Mammary epithelial cell (primary cell): ENCODE measurements at regions of chr1 and their contacts with region 1.

Region 1: DNA sequence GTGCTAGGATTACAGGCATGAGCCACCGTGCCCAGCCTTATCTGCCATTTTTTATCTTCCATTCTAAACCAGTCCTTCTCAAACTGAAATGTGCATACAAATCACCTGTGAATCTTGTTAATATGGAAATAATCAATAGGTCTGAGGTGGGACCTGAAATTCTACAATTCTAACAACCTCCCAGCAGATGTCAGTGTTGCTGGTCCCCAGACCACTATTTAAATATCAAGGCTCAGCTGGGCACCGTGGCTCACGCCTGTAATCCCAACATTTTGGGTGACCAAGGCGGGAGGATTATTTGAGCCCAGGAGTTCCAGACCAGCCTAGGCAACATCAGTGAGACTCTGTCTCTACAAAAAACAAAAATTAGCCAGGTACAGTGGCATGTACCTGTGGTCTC is 4.1 kb downstream of the UQCRHL start:
- DNase-seq: no peak
- H3K4me3 ChIP-seq: no peak overlapping the region
- H3K27ac ChIP-seq: no peak overlapping the region
- H3K4me1 ChIP-seq: peaks cover 37% of the 10 kb centered on the region
- H3K27me3 ChIP-seq: no peaks in the 10 kb centered on the region
- CTCF ChIP-seq: peak; percentile 37 to 49

Region 2: GRCh38 chr1:15696956-15697521 is 106.3 kb before region 1 on chr1:
- CTCF ChIA-PET with region 1: no interaction called
- dilution Hi-C with region 1: no loop called
- in situ Hi-C with region 1: no loop called
- intact Hi-C with region 1: no loop called
- DNase-seq: no peak
- H3K4me3 ChIP-seq: no peak overlapping the region
- H3K27ac ChIP-seq: no peak overlapping the region
- H3K4me1 ChIP-seq: no peaks in the 10 kb centered on the region
- H3K27me3 ChIP-seq: no peaks in the 10 kb centered on the region
- CTCF ChIP-seq: no peak

Region 3: DNA sequence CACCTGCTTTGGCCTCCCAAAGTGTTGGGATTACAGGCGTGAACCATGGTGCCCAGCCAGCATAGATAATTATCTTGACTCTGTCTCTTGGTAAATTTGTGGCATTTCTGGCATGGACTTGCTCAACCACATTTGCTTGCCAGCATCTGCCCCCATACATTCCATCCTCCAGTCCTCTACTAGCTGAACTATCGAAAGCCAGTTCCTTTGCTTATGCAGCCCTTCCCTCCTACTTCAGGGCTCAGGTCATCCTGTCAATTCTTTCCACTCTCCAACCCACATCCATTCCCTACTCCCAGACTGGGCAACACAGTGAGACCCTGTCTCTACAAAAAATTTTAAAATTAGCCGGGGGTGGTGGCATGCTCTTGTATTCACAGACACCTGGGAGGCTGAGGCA is 17.1 kb after region 1 on chr1:
- CTCF ChIA-PET with region 1: interaction called, 4 read pairs
- dilution Hi-C with region 1: no loop called
- in situ Hi-C with region 1: no loop called
- intact Hi-C with region 1: loop called (anchors 2 kb)
- DNase-seq: peak; percentile 72
- H3K4me3 ChIP-seq: no peak overlapping the region
- H3K27ac ChIP-seq: no peak overlapping the region
- H3K4me1 ChIP-seq: peaks cover 12% of the 10 kb centered on the region
- H3K27me3 ChIP-seq: no peaks in the 10 kb centered on the region
- CTCF ChIP-seq: no peak

Region 4: DNA sequence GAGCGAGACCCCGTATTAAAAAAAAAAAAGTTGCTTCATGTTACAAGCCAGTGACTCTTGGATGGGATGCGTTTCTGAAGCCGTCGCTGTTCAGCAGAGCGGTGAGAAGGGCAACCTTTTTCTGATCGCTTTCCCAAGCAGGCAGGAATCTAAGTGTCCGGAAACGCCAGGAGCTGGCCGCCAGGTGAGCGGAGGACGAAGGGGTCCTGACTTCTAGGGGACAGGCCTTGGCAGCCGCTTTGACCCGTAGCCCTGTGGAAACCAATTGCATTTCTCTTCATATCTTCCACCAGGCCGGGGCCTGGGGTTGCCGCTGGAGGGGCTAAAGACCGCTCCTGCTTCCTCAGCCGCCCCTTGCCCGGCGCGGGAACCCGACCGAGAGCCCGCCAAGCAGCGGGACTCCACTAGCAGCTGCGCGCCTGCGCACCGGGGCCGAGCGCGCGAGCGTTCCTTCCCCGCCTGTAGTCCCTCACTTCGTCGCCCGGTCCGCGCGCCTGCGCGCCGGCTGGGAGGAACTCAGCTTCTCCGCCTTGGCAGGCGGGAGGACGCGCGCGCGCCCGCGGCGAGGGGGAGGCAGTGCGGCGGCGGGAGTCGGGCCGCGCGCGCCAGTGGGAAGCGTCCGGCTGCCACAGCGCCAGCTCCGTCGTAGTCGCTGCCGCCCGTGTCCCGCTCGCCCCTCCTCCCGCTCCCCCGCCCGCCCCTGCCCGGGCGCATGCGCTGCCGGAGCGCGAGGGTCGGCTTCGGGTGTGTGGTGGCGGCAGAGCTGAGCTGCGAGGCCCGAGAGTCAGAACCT is 43.9 kb after region 1 on chr1 and contains the start of gene SPEN:
- CTCF ChIA-PET with region 1: no interaction called
- dilution Hi-C with region 1: no loop called
- in situ Hi-C with region 1: no loop called
- intact Hi-C with region 1: loop called (anchors 1 kb)
- DNase-seq: peak; percentile 97
- H3K4me3 ChIP-seq: peak within 1 kb of the TSS; percentile 87 to 99 (median 98)
- H3K27ac ChIP-seq: peak within 1 kb of the TSS; percentile 98
- H3K4me1 ChIP-seq: peaks cover 24% of the 10 kb centered on the region
- H3K27me3 ChIP-seq: no peaks in the 10 kb centered on the region
- CTCF ChIP-seq: peak in 1 of 2 donors; percentile 2
- total RNA-seq, gene SPEN: 32.3 to 48.1 TPM

Region 5: GRCh38 chr1:15902882-15903281 is 99.5 kb after region 1 on chr1:
- CTCF ChIA-PET with region 1: no interaction called
- dilution Hi-C with region 1: no loop called
- in situ Hi-C with region 1: loop called in 1 of 2 experiments (anchors 25 kb)
- intact Hi-C with region 1: loop called (anchors 5 kb)
- DNase-seq: peak; percentile 68
- H3K4me3 ChIP-seq: no peak overlapping the region
- H3K27ac ChIP-seq: no peak overlapping the region
- H3K4me1 ChIP-seq: peaks cover 11% of the 10 kb centered on the region
- H3K27me3 ChIP-seq: no peaks in the 10 kb centered on the region
- CTCF ChIP-seq: no peak

Region 6: GRCh38 chr1:15949453-15950245 is 146.3 kb after region 1 on chr1:
- CTCF ChIA-PET with region 1: no interaction called
- dilution Hi-C with region 1: loop called (anchors 5 kb)
- in situ Hi-C with region 1: loop called in 1 of 2 experiments (anchors 5 kb)
- intact Hi-C with region 1: loop called (anchors 2 kb)
- DNase-seq: peak; percentile 99
- H3K4me3 ChIP-seq: peak overlapping the region in 2 of 3 experiments; percentile 3 to 16
- H3K27ac ChIP-seq: peak overlapping the region; percentile 99
- H3K4me1 ChIP-seq: peaks cover 67% of the 10 kb centered on the region
- H3K27me3 ChIP-seq: no peaks in the 10 kb centered on the region
- CTCF ChIP-seq: no peak

Region 7: DNA sequence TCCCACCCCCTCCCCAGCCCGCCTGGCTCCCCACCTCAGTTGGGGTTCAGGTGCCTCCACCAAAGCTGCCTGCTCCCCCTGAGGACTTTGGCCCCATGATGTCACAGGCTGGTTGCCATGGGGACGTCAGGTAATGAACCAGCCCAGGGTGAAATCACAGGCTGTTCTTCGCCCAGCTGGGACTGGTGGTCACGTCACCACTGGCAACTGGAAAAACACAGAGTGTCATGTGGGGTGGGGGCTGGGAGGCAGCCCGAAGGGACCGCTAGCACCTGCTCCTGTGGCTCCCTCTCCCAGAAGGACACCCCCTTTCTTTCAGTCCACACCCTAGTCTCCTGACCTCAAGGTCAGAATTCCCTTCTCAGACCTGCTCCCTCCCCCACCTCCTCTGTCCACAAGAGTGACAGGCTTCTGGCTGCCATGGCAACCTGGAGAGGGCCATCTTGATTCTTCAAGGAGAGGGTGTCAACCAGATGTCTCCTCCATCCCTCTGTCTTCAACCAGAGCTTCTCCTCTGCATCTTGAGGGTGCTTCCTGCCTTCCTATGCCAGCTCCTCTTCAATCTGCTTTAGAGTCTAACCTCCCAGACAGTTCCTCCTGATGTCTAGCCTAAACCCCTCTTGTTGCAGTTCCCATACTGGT is 263.9 kb after region 1 on chr1:
- CTCF ChIA-PET with region 1: no interaction called
- dilution Hi-C with region 1: loop called (anchors 5 kb)
- in situ Hi-C with region 1: no loop called
- intact Hi-C with region 1: no loop called
- DNase-seq: peak; percentile 46
- H3K4me3 ChIP-seq: no peak overlapping the region
- H3K27ac ChIP-seq: no peak overlapping the region
- H3K4me1 ChIP-seq: no peaks in the 10 kb centered on the region
- H3K27me3 ChIP-seq: no peaks in the 10 kb centered on the region
- CTCF ChIP-seq: no peak